A549 (cell line): ENCODE measurements at regions of chr11 and their contacts with region 1.

Region 1: DNA sequence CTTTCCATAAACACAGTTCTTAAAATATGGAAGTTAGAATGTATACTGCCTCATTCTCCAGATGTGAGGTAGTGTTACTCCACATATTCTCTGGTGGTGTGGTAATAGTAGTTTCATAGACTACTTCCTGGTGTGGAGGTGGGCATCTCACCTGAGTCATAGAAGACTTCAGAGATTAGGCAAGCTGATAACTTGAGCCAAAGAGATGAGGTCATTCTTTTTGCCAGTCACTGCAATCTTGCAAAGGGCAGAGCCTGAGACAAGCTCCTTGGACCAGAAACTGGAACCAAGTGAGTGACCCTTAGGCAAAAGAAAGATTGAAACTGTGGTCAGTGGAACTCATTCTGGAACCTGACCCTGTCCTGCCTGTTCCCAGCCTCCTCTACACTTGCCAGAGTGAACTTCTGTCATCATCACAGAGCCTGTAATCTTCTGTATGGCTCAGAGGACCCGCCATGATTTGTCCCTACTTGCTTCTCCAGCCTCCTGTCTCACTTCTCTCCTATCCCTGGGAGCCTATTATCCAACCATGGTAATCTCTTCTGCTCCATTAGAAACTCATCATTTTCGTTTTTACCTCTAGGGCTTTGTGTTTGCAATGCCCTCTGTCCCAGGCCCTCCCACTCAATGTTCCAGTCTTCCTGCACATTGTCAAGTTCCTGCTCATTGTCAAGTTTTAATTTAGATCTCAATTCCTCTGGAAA is 10.6 kb upstream of the CCDC83 start:
- DNase-seq: peak; percentile 87 to 89
- ATAC-seq: peak; percentile 94 to 100
- H3K4me3 ChIP-seq: no peak overlapping the region
- H3K27ac ChIP-seq: peak overlapping the region; percentile 62 to 80
- H3K4me1 ChIP-seq: peaks cover 18% of the 10 kb centered on the region
- CTCF ChIP-seq: no peak
- EP300 ChIP-seq: peak; percentile 40 to 41; a peak in 2 of 5 replicates
- POLR2A ChIP-seq: no peak
- RAD21 ChIP-seq: no peak; a peak in 1 of 5 replicates

Region 2: GRCh38 chr11:85826116-85826855 is 18.3 kb before region 1 on chr11:
- CTCF ChIA-PET with region 1: interaction called, 11 read pairs
- POLR2A ChIA-PET with region 1: no interaction called
- DNase-seq: peak; percentile 58 to 84
- ATAC-seq: peak; percentile 78 to 81
- H3K4me3 ChIP-seq: no peak overlapping the region
- H3K27ac ChIP-seq: peak overlapping the region; percentile 71 to 80; a peak in 4 of 6 replicates
- H3K4me1 ChIP-seq: peaks cover 62% of the 10 kb centered on the region
- CTCF ChIP-seq: peak; percentile 60
- EP300 ChIP-seq: no peak
- POLR2A ChIP-seq: no peak
- RAD21 ChIP-seq: peak; percentile 59 to 74

Region 3: GRCh38 chr11:85886089-85887056 is 41.8 kb after region 1 on chr11:
- CTCF ChIA-PET with region 1: no interaction called
- POLR2A ChIA-PET with region 1: no interaction called
- DNase-seq: no peak
- ATAC-seq: no peak
- H3K4me3 ChIP-seq: no peak overlapping the region
- H3K27ac ChIP-seq: no peak overlapping the region
- H3K4me1 ChIP-seq: peaks cover 21% of the 10 kb centered on the region
- CTCF ChIP-seq: no peak
- EP300 ChIP-seq: no peak
- POLR2A ChIP-seq: no peak
- RAD21 ChIP-seq: no peak

Region 4: DNA sequence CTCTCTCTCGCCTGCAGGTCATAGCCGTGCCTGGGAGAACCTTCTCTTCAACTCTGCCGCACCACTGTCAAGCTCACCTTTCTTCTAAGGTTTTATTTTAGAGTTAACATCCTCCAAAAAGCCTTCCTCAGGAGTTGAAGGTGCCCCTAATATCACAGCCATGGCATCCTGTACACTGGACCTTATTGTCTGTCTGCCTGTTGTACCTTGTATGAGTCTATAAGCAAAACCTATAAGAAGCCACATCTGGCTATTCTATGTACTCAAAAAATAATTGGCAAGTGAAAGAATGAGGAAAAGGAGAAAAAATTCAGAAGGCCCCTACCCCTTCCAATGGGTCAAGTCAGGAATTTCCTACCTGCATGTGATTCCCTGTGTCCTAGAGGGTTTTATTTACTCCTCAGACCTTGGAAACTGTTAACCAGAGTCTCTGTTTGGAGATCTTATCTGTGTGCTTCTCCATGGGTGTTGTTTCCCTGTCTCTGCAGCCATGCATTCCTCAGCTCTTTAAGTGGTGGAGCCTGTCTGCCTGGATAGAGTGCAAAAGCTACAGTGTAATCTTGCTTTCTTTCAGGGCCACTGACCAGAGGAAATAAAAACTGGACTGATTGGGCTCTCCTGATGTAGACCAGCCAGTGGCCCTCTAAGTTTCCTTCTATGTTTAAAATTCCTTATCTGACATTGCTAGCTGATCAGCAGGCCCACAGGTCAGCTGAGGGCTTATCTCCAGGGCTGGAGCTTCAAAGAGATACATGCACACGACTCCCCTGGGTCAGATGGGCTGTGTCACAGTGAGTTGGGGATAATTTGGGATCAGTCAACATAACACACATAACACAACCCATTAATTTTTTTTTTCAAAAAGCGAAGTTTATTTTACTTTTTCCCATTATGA is 1155.5 kb after region 1 on chr11:
- CTCF ChIA-PET with region 1: no interaction called
- POLR2A ChIA-PET with region 1: interaction called, 10 read pairs
- DNase-seq: peak in 1 of 2 experiments; percentile 56
- ATAC-seq: peak; percentile 35 to 80; a peak in 5 of 6 replicates
- H3K4me3 ChIP-seq: no peak overlapping the region
- H3K27ac ChIP-seq: peak overlapping the region in 1 of 2 experiments; percentile 34; a peak in 1 of 6 replicates
- H3K4me1 ChIP-seq: peaks cover 6% of the 10 kb centered on the region; the same call in 1 of the 3 replicates
- CTCF ChIP-seq: no peak
- EP300 ChIP-seq: no peak
- POLR2A ChIP-seq: no peak
- RAD21 ChIP-seq: no peak